Activated CD8-positive, alpha-beta T cell treated with anti-CD3 and anti-CD28 coated beads, Interleukin-2, amount 10 ng/mL, durations not matched to agents 7 days and 5 days (primary cell): ENCODE measurements at regions of chr11 and their contacts with region 1.

Region 1: GRCh38 chr11:2992234-2992996 is at the start of gene NAP1L4:
- DNase-seq: peak; percentile 98
- ATAC-seq: peak; percentile 88
- H3K4me3 Mint-ChIP-seq: peak within 1 kb of the TSS; percentile 100
- H3K27ac Mint-ChIP-seq: peak within 1 kb of the TSS; percentile 99
- H3K4me1 Mint-ChIP-seq: peaks cover 23% of the 10 kb centered on the region
- H3K27me3 Mint-ChIP-seq: no peaks in the 10 kb centered on the region
- total RNA-seq, gene NAP1L4: 287 to 300 TPM

Region 2: DNA sequence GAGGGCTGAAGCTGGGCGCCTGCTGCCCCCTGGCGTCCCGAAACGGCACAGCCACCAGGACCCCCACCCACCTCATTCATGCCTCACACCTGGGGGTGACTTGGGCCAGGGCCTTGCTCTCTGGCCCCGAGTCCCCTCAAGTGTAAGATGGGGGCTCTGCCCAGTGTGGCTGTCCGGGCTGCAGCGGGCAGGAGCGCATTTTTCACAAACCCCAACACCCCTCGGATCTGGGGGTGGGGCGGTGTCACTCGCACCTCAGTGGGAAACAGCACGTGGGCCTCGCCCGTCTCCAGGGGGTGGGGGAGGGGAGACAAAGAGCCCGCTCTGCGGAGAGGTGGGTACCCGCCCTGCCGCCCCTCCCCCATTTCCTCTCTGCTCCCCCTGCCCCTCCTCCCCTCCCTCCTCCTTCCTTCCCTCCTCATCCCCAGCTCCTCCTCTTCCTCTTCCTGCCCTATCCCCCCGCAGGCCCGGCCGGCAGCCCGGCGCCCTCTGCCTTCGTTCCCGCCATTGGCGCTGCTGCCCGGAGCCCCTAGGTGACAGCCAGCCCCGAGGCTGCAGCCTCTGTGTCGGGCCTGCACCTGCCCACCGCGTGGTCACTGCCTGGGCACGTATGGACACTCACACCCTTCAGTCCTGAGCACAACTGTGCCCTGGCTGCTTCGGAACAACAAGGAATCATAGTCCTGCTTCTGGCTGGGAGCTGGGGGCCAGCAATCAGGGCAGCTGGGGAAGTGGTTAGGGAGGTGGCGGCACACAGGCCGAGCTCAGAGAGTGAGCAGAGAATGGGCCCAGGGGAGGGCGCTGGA is 100.0 kb before region 1 on chr11:
- CTCF ChIA-PET with region 1: interaction called, 11 read pairs
- POLR2A ChIA-PET with region 1: interaction called, 3 read pairs
- DNase-seq: peak; percentile 86
- ATAC-seq: peak; percentile 70
- H3K4me3 Mint-ChIP-seq: peak overlapping the region; percentile 80
- H3K27ac Mint-ChIP-seq: peak overlapping the region; percentile 92
- H3K4me1 Mint-ChIP-seq: peaks cover 34% of the 10 kb centered on the region
- H3K27me3 Mint-ChIP-seq: peaks cover under 1% of the 10 kb centered on the region

Region 3: GRCh38 chr11:2945031-2945756 is 47.2 kb before region 1 on chr11:
- CTCF ChIA-PET with region 1: no interaction called
- POLR2A ChIA-PET with region 1: no interaction called
- DNase-seq: peak; percentile 71
- ATAC-seq: peak; percentile 72
- H3K4me3 Mint-ChIP-seq: peak overlapping the region; percentile 43
- H3K27ac Mint-ChIP-seq: peak overlapping the region; percentile 72
- H3K4me1 Mint-ChIP-seq: peaks cover 49% of the 10 kb centered on the region
- H3K27me3 Mint-ChIP-seq: no peaks in the 10 kb centered on the region

Region 4: DNA sequence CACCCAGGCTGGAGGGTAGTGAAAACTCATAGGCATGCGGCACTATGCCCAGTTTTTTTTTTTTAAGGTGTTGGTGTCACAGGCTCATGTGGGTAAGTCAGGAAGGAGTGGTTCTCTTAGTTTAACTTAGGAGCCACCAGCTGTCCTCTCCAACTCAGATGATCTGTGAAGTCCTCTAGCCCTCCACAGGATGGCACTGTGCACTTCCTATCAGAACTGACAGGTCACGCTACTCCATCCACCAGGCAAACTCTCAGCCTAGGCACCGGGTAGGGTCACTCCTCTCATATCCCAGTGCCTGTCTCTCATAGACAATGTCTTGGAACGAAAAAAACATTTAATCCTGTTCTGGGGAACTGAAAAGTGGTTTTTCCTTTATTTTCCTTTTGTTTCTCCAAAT is 16.8 kb before region 1 on chr11:
- CTCF ChIA-PET with region 1: interaction called, 34 read pairs
- POLR2A ChIA-PET with region 1: interaction called, 17 read pairs
- DNase-seq: peak; percentile 70
- ATAC-seq: peak; percentile 90
- H3K4me3 Mint-ChIP-seq: no peak overlapping the region
- H3K27ac Mint-ChIP-seq: peak overlapping the region; percentile 43
- H3K4me1 Mint-ChIP-seq: peaks cover 36% of the 10 kb centered on the region
- H3K27me3 Mint-ChIP-seq: no peaks in the 10 kb centered on the region

Region 5: GRCh38 chr11:2982214-2982613 is 10.2 kb before region 1 on chr11:
- CTCF ChIA-PET with region 1: interaction called, 4 read pairs
- POLR2A ChIA-PET with region 1: interaction called, 14 read pairs
- DNase-seq: no peak
- ATAC-seq: no peak
- H3K4me3 Mint-ChIP-seq: no peak overlapping the region
- H3K27ac Mint-ChIP-seq: peak overlapping the region; percentile 5
- H3K4me1 Mint-ChIP-seq: peaks cover 65% of the 10 kb centered on the region
- H3K27me3 Mint-ChIP-seq: no peaks in the 10 kb centered on the region

Region 6: GRCh38 chr11:3006505-3007183 is 14.2 kb after region 1 on chr11:
- CTCF ChIA-PET with region 1: interaction called, 78 read pairs
- POLR2A ChIA-PET with region 1: interaction called, 168 read pairs
- DNase-seq: peak; percentile 89
- ATAC-seq: peak; percentile 97
- H3K4me3 Mint-ChIP-seq: peak overlapping the region; percentile 82
- H3K27ac Mint-ChIP-seq: peak overlapping the region; percentile 86
- H3K4me1 Mint-ChIP-seq: peaks cover 74% of the 10 kb centered on the region
- H3K27me3 Mint-ChIP-seq: no peaks in the 10 kb centered on the region

Region 7: GRCh38 chr11:3014057-3014938 is 21.9 kb after region 1 on chr11:
- CTCF ChIA-PET with region 1: interaction called, 78 read pairs
- POLR2A ChIA-PET with region 1: interaction called, 168 read pairs
- DNase-seq: peak; percentile 94
- ATAC-seq: peak; percentile 84
- H3K4me3 Mint-ChIP-seq: peak overlapping the region; percentile 56
- H3K27ac Mint-ChIP-seq: peak overlapping the region; percentile 95
- H3K4me1 Mint-ChIP-seq: peaks cover 95% of the 10 kb centered on the region
- H3K27me3 Mint-ChIP-seq: no peaks in the 10 kb centered on the region

Region 8: DNA sequence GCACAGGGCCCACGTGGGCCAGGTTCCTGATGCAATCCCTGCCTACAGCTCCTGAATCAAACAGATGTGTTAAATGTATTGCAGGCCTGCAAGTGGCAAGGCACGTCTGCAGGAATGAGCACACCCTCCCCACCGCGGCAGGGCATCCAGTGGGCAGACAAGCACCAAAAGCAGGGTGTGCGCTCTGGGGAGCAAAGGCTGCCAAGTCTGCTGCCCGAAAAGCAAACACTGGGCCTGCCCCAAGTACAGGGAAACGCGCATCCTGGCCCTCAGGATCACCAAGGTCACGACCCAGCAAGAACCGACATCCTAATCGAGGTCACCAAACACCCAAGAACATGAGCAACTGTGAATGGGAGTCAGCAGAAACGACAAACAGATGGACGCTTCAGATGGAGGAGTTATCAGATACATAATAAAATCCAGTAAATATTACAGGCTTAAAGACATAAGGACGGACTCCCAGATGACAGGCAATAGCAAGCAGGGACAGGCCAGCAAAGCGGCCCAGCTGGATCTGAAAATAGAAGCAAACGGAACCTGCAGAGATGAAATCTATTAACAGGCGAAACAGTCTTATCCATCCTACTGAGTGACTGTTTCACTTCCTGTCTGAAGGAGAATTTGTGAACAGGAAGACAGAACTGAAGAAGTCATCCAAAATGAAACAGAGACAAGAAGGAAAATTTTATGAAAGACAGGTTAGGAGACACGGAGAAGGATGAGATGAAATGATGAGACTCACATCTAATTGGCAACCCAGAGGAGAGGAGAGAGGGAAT is 38.1 kb after region 1 on chr11:
- CTCF ChIA-PET with region 1: no interaction called
- POLR2A ChIA-PET with region 1: no interaction called
- DNase-seq: no peak
- ATAC-seq: no peak
- H3K4me3 Mint-ChIP-seq: no peak overlapping the region
- H3K27ac Mint-ChIP-seq: peak overlapping the region; percentile 60
- H3K4me1 Mint-ChIP-seq: peaks cover 23% of the 10 kb centered on the region
- H3K27me3 Mint-ChIP-seq: no peaks in the 10 kb centered on the region